Gastrocnemius medialis (tissue), 4 donors: ENCODE measurements at regions of chr10 and their contacts with region 1.

Region 1: DNA sequence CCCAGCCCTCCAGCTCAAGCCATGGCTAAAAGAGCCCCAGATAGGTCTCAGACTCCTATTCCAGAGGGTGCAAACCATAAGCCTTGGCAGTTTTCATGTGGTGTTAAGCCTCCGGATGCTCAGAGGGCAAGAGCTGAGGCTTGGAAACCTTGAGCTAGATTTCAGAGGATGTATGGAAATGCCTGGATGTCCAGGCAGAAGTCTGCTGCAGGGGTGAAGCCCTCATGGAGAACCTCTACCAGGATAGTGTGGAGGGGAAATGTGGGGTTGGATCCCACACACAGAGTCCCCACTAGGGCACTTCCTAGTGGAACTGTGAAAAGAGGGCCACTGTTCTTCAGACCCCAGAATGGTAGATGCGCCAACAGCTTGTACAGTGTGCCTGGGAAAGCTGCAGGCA is 13.2 kb upstream of the HPSE2 start:
- DNase-seq: no peak
- ATAC-seq: no peak
- H3K4me3 ChIP-seq: no peak overlapping the region
- H3K27ac ChIP-seq: no peak overlapping the region
- H3K4me1 ChIP-seq: no peaks in the 10 kb centered on the region
- H3K27me3 ChIP-seq: no peaks in the 10 kb centered on the region
- CTCF ChIP-seq: no peak
- POLR2A ChIP-seq: no peak

Region 2: DNA sequence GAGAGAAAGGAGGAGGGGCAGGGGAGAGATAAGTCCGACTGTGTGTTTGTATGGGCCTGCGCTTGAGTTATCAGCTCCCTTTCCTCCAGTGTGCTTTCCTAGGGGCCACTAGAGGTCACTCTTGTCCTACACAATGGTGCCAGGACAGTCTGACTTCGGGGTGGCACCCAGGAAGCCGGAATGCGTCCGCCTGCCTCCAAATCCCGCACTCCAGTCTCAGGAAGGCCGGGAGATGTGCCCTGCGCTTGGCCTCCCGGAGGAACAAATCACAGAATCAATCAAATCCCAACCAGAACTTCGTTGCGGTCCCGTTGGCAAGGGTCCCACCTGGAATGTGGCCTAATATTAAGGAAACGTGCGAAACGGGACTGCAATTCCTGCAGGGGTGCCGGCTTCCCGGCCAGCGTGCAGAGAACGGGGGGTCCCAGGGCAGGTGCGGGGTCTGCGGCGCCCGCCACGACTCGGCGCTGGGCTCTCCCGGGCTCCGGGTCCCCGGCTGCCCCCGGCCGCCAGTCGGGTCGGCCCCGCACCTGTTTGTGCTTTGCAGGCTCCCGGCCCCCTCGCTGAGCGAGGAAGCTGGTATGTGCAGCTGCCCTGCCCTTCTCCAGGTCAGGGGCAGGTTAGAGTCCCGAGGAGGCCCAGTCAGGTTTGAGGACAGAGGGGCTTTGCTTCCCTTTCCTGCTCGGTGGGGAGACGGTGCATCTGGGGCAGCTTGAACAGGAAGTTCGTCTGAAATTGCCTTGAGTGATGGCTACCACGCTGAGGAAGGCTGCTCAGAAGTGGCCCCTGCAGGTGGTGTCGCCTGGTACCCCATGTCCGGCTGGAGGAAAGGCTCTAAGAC is 781.1 kb before region 1 on chr10:
- in situ Hi-C with region 1: loop called (anchors 5 to 10 kb)
- intact Hi-C with region 1: loop called (anchors 1 kb)
- DNase-seq: peak; percentile 59 to 68
- ATAC-seq: peak; percentile 98 to 99
- H3K4me3 ChIP-seq: peak overlapping the region; percentile 46 to 79 (median 62)
- H3K27ac ChIP-seq: no peak overlapping the region
- H3K4me1 ChIP-seq: no peaks in the 10 kb centered on the region
- H3K27me3 ChIP-seq: peaks cover 0 to 4% (median 0%) of the 10 kb centered on the region in 3 donors
- CTCF ChIP-seq: peak; percentile 68 to 88 (median 78)
- POLR2A ChIP-seq: no peak

Region 3: DNA sequence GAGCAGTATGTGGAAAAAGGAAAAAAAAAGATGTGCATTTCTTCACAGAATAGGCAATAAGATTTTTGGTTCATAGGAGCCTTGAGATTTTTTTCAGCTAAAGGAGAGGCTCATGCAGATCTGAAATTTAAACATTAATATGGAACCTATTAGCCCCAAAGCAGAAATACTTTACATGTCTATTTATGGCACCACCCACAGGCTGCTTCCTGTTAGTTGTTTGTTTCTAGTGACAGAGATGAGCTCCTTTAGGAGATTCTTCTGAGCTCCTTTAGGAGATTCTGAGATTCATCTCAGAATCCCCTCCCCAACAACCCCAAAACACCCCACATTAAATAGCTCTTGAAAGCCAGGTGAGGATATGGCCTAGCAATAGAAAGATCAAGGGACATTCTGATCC is 774.2 kb before region 1 on chr10:
- in situ Hi-C with region 1: loop called (anchors 5 to 10 kb)
- intact Hi-C with region 1: no loop called
- DNase-seq: no peak
- ATAC-seq: no peak
- H3K4me3 ChIP-seq: no peak overlapping the region
- H3K27ac ChIP-seq: no peak overlapping the region
- H3K4me1 ChIP-seq: no peaks in the 10 kb centered on the region
- H3K27me3 ChIP-seq: no peaks in the 10 kb centered on the region
- CTCF ChIP-seq: no peak
- POLR2A ChIP-seq: no peak

Region 4: GRCh38 chr10:99421233-99421739 is 172.5 kb after region 1 on chr10:
- in situ Hi-C with region 1: no loop called
- intact Hi-C with region 1: no loop called
- DNase-seq: no peak
- ATAC-seq: no peak
- H3K4me3 ChIP-seq: no peak overlapping the region
- H3K27ac ChIP-seq: peak overlapping the region; percentile 4 to 99 (median 34)
- H3K4me1 ChIP-seq: peaks cover 52 to 57% of the 10 kb centered on the region in 2 donors
- H3K27me3 ChIP-seq: no peaks in the 10 kb centered on the region
- CTCF ChIP-seq: no peak
- POLR2A ChIP-seq: no peak

Region 5: GRCh38 chr10:99497343-99498025 is 248.7 kb after region 1 on chr10:
- in situ Hi-C with region 1: no loop called
- intact Hi-C with region 1: no loop called
- DNase-seq: no peak
- ATAC-seq: no peak
- H3K4me3 ChIP-seq: no peak overlapping the region
- H3K27ac ChIP-seq: no peak overlapping the region
- H3K4me1 ChIP-seq: no peaks in the 10 kb centered on the region
- H3K27me3 ChIP-seq: peaks cover 0 to 8% (median 7%) of the 10 kb centered on the region in 3 donors
- CTCF ChIP-seq: no peak
- POLR2A ChIP-seq: no peak